ENCODE measurements at regions of chr10 and their contacts with region 1.

Region 1: DNA sequence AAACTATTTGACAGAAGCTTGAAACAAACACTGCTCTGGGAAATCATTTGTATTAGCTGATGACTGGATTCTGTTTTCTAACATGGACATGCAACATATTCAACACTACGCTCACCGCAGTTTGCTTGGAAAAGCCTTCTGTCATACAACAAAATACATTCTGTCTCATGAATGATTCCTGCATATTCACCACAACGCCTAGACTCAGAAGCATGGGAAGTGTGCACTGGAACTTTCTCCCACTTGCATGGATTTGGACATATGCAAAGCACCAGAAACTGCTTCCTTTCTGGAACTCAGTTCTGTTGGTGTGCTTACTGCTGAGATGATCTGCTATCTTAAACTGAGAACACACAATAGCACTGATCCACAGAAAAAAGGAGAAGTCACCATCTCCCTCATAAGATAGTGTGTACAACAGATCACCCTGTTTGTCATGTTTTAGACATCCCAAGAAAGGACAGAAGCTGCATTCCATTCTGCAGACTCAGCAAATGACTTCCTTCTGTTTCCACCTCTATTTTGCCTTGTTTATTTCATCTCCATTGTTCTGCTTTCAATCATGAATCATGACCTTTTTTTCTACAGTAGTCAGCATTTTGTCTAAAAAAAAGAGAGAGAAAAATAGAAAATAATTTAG is 115.8 kb downstream of the HTR7 start:
- DNase-seq: no peak
- ATAC-seq: no peak
- H3K4me3 ChIP-seq: no peak overlapping the region
- H3K27ac ChIP-seq: no peak overlapping the region
- H3K4me1 ChIP-seq: no peaks in the 10 kb centered on the region
- H3K27me3 ChIP-seq: peaks cover 0 to 4% (median 3%) of the 10 kb centered on the region in 3 donors
- CTCF ChIP-seq: no peak

Region 2: DNA sequence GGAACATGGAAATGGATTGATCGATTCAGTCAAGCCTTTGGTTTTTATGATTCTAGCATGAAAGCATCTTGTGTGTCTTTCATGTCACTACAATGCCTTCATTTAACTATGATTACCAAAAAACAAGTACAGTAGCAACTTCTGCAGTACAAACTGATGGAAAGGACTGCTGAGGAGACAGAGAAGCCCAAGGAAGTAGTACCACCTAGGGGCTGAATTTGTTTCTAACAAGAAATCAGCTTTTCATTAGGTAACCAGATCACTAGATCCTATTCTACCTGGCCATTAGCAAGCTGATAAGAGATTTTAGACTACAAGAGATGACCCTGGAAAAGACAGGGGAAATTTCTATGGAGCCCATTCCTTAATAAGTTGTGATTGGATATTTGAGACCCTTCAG is 1352.8 kb before region 1 on chr10:
- intact Hi-C with region 1: loop called in 1 of 2 experiments (anchors 5 kb)
- DNase-seq: no peak
- ATAC-seq: no peak
- H3K4me3 ChIP-seq: no peak overlapping the region
- H3K27ac ChIP-seq: no peak overlapping the region
- H3K4me1 ChIP-seq: peaks cover 37% of the 10 kb centered on the region
- H3K27me3 ChIP-seq: no peaks in the 10 kb centered on the region
- CTCF ChIP-seq: peak; percentile 45

Region 3: GRCh38 chr10:90817128-90817889 is 75.3 kb after region 1 on chr10:
- intact Hi-C with region 1: no loop called
- DNase-seq: no peak
- ATAC-seq: no peak
- H3K4me3 ChIP-seq: no peak overlapping the region
- H3K27ac ChIP-seq: no peak overlapping the region
- H3K4me1 ChIP-seq: no peaks in the 10 kb centered on the region
- H3K27me3 ChIP-seq: no peaks in the 10 kb centered on the region
- CTCF ChIP-seq: no peak

Measured in psoas muscle (tissue), 8 donors.